ENCODE measurements at regions of chr9 and their contacts with region 1.

Region 1: GRCh38 chr9:92634712-92635605 is 35.0 kb downstream of the IPPK start:
- DNase-seq: peak; percentile 55
- H3K4me3 Mint-ChIP-seq: no peak overlapping the region
- H3K27ac Mint-ChIP-seq: no peak overlapping the region
- H3K4me1 Mint-ChIP-seq: peaks cover 15% of the 10 kb centered on the region
- H3K27me3 Mint-ChIP-seq: no peaks in the 10 kb centered on the region

Region 2: DNA sequence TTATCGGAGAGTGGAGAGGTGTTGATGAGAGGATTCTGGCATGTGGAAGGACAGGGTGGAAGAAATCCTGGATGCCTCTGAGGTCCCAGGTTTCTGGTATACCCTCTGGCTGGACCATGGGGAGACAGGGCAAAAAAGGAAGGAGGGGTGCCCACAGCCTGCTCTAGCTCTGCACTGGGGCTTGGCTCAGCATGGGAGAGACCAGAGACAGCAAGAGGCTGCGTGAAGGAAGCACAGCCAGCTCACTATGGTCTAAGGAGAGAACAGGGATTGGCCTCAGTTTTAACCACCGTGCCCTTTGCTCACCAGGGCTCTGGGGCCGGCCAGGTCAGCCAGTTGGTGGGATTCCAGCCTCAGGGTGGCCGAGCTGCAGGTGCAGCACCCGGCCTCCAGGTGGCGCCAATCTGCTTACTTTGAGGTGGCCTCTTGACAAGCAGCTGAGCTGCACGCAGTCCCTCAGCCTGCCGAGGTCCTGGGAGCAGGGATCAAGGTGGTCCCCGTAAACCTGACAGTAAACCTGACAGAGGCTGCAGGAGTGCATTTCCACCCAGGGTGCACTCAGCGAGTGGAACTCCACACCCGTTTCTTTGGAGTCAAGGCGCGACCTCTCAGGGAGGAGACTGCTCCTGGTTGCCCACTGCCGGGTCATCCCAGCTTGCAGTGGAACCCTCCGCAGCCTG is 494.7 kb before region 1 on chr9:
- intact Hi-C with region 1: loop called (anchors 5 kb)
- DNase-seq: peak; percentile 60
- H3K4me3 Mint-ChIP-seq: no peak overlapping the region
- H3K27ac Mint-ChIP-seq: no peak overlapping the region
- H3K4me1 Mint-ChIP-seq: peaks cover 7% of the 10 kb centered on the region
- H3K27me3 Mint-ChIP-seq: peaks cover 31% of the 10 kb centered on the region

Region 3: DNA sequence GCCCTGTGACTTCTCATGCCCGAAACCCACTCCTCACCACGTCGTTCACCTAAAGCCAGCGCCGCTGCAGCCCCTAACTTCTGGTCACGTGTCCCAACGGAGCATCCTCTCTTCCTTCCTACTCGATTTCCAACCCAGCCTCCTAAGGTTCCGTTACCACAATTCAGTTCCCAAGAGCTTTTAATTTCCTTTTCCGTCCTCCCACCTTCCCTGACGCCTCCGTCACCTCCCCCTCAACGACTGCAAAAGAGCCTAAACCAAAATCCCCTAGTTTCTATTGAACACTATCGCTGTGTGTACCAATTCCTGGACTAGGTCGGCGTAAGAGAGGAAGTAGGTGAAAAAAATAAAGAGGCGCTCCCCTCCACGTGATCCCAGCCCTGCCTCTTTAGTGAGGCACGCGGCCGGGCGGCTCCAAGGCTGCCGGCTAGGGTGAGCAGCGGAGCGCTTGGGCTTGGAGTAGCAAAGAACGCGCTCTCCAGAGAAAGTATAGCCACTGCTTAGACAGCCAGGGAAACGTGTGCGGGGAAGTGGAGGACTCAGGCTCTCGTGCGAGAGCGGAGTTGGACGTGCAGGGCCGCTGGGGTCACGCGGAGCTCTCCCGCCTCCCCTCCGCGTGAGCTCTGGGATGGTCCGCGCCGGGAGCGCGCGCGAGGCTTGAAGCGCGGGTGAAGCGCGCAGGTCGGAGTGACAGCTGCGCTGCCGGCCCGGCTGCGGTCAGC is 309.5 kb before region 1 on chr9 and contains the starts of genes CENPP and NOL8:
- intact Hi-C with region 1: loop called (anchors 5 kb)
- DNase-seq: peak; percentile 82
- H3K4me3 Mint-ChIP-seq: peak within 1 kb of the TSS; percentile 92
- H3K27ac Mint-ChIP-seq: peak within 1 kb of the TSS; percentile 95
- H3K4me1 Mint-ChIP-seq: peaks cover 31% of the 10 kb centered on the region
- H3K27me3 Mint-ChIP-seq: no peaks in the 10 kb centered on the region
- total RNA-seq, gene CENPP: 19.2 and 21.0 TPM in 2 replicates
- total RNA-seq, gene NOL8: 73.2 and 75.5 TPM in 2 replicates

Region 4: DNA sequence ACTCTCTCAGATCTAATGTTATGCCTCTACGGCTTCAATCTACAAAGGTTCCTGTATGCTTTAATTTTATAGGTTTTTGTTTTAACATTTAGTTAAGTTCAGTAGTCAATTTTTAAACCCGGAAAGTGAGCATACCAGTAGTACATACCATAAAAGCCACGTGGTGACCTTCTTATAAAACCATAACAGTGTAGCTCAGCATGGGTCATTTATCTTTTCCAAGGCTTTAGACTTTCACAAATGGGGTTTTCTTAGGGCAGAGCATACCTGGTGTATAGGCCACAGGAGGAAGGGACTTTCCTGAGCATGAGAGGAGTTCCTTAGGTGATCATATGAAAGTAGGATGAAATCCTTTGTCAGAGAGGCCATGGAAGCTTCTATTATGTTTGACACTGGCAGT is 122.3 kb before region 1 on chr9:
- intact Hi-C with region 1: loop called (anchors 10 kb)
- DNase-seq: no peak
- H3K4me3 Mint-ChIP-seq: no peak overlapping the region
- H3K27ac Mint-ChIP-seq: no peak overlapping the region
- H3K4me1 Mint-ChIP-seq: peaks cover 1% of the 10 kb centered on the region
- H3K27me3 Mint-ChIP-seq: no peaks in the 10 kb centered on the region